Endothelial cell of umbilical vein (primary cell): ENCODE measurements at regions of chr6 and their contacts with region 1.

Region 1: GRCh38 chr6:106339334-106340029 is 13.9 kb upstream of the ATG5 start:
- DNase-seq: peak; percentile 57
- H3K4me3 ChIP-seq: no peak overlapping the region
- H3K27ac ChIP-seq: no peak overlapping the region
- H3K4me1 ChIP-seq: no peaks in the 10 kb centered on the region
- H3K27me3 ChIP-seq: peaks cover 15 to 24% of the 10 kb centered on the region in 2 experiments
- CTCF ChIP-seq: peak; percentile 81 to 85
- POLR2A ChIP-seq: no peak

Region 2: GRCh38 chr6:106325336-106326178 is 13.9 kb before region 1 on chr6 and contains the start of gene ATG5:
- CTCF ChIA-PET with region 1: interaction called, 31 read pairs
- POLR2A ChIA-PET with region 1: interaction called, 4 read pairs
- dilution Hi-C with region 1: no loop called
- intact Hi-C with region 1: no loop called
- DNase-seq: peak; percentile 99
- H3K4me3 ChIP-seq: peak within 1 kb of the TSS; percentile 81 to 93 (median 84)
- H3K27ac ChIP-seq: peak within 1 kb of the TSS; percentile 77
- H3K4me1 ChIP-seq: peaks cover 6% of the 10 kb centered on the region
- H3K27me3 ChIP-seq: peaks cover 2 to 13% of the 10 kb centered on the region in 2 experiments
- CTCF ChIP-seq: no peak
- POLR2A ChIP-seq: peak; percentile 79
- total RNA-seq, gene ATG5: 32.8 and 35.9 TPM in 2 replicates

Region 3: DNA sequence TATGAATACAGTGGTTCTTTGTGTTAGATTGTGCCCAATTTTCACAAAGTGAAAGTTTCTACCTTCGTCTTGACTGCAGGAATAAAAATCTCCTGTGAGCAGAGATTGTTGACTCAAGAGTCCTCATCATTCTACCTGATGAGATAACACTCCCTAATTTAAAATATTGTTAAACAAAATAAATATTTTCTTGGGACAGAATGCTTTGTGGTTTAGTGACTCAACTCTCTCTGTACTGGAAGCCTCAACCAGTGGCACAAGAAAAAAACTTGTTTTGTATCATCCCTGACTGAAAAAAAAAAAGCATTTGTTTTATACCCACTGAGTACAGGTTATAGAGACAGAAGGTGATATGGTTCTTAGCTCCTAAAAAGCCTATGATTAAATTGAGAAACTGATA is 100.0 kb after region 1 on chr6:
- CTCF ChIA-PET with region 1: interaction called, 23 read pairs
- POLR2A ChIA-PET with region 1: no interaction called
- dilution Hi-C with region 1: no loop called
- intact Hi-C with region 1: no loop called
- DNase-seq: no peak
- H3K4me3 ChIP-seq: no peak overlapping the region
- H3K27ac ChIP-seq: no peak overlapping the region
- H3K4me1 ChIP-seq: no peaks in the 10 kb centered on the region
- H3K27me3 ChIP-seq: peaks cover 22 to 44% of the 10 kb centered on the region in 2 experiments
- CTCF ChIP-seq: no peak
- POLR2A ChIP-seq: no peak

Region 4: GRCh38 chr6:106979427-106979884 is 640.0 kb after region 1 on chr6:
- CTCF ChIA-PET with region 1: interaction called, 83 read pairs
- POLR2A ChIA-PET with region 1: no interaction called
- dilution Hi-C with region 1: no loop called
- intact Hi-C with region 1: loop called (anchors 1 kb)
- DNase-seq: peak; percentile 78
- H3K4me3 ChIP-seq: no peak overlapping the region
- H3K27ac ChIP-seq: no peak overlapping the region
- H3K4me1 ChIP-seq: no peaks in the 10 kb centered on the region
- H3K27me3 ChIP-seq: peaks cover 11 to 23% of the 10 kb centered on the region in 2 experiments
- CTCF ChIP-seq: peak; percentile 93 to 94
- POLR2A ChIP-seq: no peak

Region 5: GRCh38 chr6:107704347-107705013 is 1365.0 kb after region 1 on chr6:
- CTCF ChIA-PET with region 1: no interaction called
- POLR2A ChIA-PET with region 1: no interaction called
- dilution Hi-C with region 1: no loop called
- intact Hi-C with region 1: loop called (anchors 10 kb)
- DNase-seq: peak; percentile 58
- H3K4me3 ChIP-seq: no peak overlapping the region
- H3K27ac ChIP-seq: no peak overlapping the region
- H3K4me1 ChIP-seq: no peaks in the 10 kb centered on the region
- H3K27me3 ChIP-seq: peaks cover 10 to 14% of the 10 kb centered on the region in 2 experiments
- CTCF ChIP-seq: peak; percentile 60 to 68
- POLR2A ChIP-seq: no peak